ENCODE measurements at regions of chr12 and their contacts with region 1.

Region 1: GRCh38 chr12:32455607-32456071 is 56.3 kb downstream of the FGD4 start:
- DNase-seq: no peak
- H3K4me3 ChIP-seq: peak overlapping the region in 58 of 59 donors; percentile 13 to 72 (median 47)
- H3K27ac ChIP-seq: peak overlapping the region in 37 of 59 donors; percentile 3 to 73 (median 37)
- H3K27me3 ChIP-seq: no peaks in the 10 kb centered on the region
- CTCF ChIP-seq: peak; percentile 55 to 95 (median 81)

Region 2: GRCh38 chr12:32273712-32274111 is 181.9 kb before region 1 on chr12:
- intact Hi-C with region 1: no loop called
- DNase-seq: no peak
- H3K4me3 ChIP-seq: no peak overlapping the region
- H3K27ac ChIP-seq: no peak overlapping the region
- H3K27me3 ChIP-seq: no peaks in the 10 kb centered on the region
- CTCF ChIP-seq: no peak

Region 3: DNA sequence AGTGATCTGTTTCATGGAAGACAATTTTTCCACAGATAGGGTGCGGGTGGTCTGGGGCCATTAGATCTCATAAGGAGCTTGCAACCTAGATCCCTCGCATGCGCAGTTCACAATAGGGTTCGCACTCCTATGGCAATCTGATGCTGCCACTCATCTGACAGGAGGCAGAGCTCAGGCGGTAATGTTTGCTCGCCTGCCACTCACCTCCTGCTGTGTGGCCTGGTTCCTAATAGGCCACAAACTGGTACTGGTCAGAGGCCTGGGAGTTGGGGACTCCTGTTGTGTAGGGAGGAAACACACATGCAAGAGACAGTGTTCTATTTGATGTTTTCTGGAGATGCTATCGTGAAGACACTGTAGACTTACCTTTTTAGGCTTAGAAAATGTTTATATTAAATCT is 133.3 kb before region 1 on chr12:
- intact Hi-C with region 1: no loop called
- DNase-seq: peak in 1 of 10 donors; percentile 77
- H3K4me3 ChIP-seq: no peak overlapping the region
- H3K27ac ChIP-seq: peak overlapping the region in 2 of 59 donors; percentile 44 to 53
- H3K27me3 ChIP-seq: no peaks in the 10 kb centered on the region
- CTCF ChIP-seq: no peak

Region 4: GRCh38 chr12:32365473-32366064 is 90.1 kb before region 1 on chr12:
- intact Hi-C with region 1: loop called in 1 of 2 experiments (anchors 10 kb)
- DNase-seq: peak in 5 of 10 donors; percentile 26 to 63 (median 45)
- H3K4me3 ChIP-seq: no peak overlapping the region
- H3K27ac ChIP-seq: no peak overlapping the region
- H3K27me3 ChIP-seq: no peaks in the 10 kb centered on the region
- CTCF ChIP-seq: peak; percentile 59 to 89 (median 78)

Region 5: GRCh38 chr12:32377344-32378055 is 78.1 kb before region 1 on chr12:
- intact Hi-C with region 1: no loop called
- DNase-seq: no peak
- H3K4me3 ChIP-seq: no peak overlapping the region
- H3K27ac ChIP-seq: no peak overlapping the region
- H3K27me3 ChIP-seq: no peaks in the 10 kb centered on the region
- CTCF ChIP-seq: no peak

Region 6: GRCh38 chr12:32399337-32400113 is 56.1 kb before region 1 on chr12 and contains the start of gene FGD4:
- intact Hi-C with region 1: loop called in 1 of 2 experiments (anchors 10 kb)
- DNase-seq: peak; percentile 56 to 83 (median 76)
- H3K4me3 ChIP-seq: peak within 1 kb of the TSS; percentile 48 to 87 (median 78)
- H3K27ac ChIP-seq: peak within 1 kb of the TSS in 39 of 59 donors; percentile 1 to 87 (median 40)
- H3K27me3 ChIP-seq: no peaks in the 10 kb centered on the region
- CTCF ChIP-seq: peak in 49 of 56 donors; percentile 17 to 60 (median 40)
- total RNA-seq, gene FGD4: 23.1 to 59.4 (median 37.2) TPM

Region 7: DNA sequence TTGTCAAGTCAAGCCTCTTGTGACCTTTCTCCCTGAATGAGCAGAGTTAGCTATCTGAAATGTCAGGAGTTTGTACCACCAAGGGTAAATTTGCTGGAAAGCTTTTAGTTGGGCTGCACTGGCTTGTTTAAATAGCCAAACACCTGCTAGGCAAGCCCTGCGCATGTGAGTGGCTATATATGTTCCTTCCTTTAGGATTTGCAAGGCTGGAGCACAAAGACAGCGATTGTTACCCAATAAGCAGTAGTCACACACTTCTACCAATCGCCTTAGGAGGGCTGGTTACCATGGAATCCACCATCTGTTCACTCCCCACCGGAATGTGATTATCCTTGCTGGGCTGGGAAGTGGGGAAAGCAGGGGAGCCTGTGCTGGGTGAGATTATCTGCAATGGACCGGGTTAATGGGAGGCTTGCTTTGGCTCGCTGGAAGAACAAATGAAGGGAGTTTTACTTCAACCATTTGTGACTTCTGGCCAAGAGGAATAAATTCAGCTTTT is 46.2 kb after region 1 on chr12:
- intact Hi-C with region 1: loop called in 1 of 2 experiments (anchors 5 kb)
- DNase-seq: peak in 9 of 10 donors; percentile 48 to 78 (median 61)
- H3K4me3 ChIP-seq: peak overlapping the region; percentile 29 to 76 (median 59)
- H3K27ac ChIP-seq: peak overlapping the region in 58 of 59 donors; percentile 24 to 87 (median 74)
- H3K27me3 ChIP-seq: no peaks in the 10 kb centered on the region
- CTCF ChIP-seq: no peak

Region 8: GRCh38 chr12:32586390-32586789 is 130.8 kb after region 1 on chr12:
- intact Hi-C with region 1: loop called in 1 of 2 experiments (anchors 10 kb)
- DNase-seq: no peak
- H3K4me3 ChIP-seq: no peak overlapping the region
- H3K27ac ChIP-seq: no peak overlapping the region
- H3K27me3 ChIP-seq: no peaks in the 10 kb centered on the region
- CTCF ChIP-seq: no peak

Region 9: GRCh38 chr12:32659908-32660440 is 204.3 kb after region 1 on chr12:
- intact Hi-C with region 1: loop called (anchors 5 kb)
- DNase-seq: no peak
- H3K4me3 ChIP-seq: no peak overlapping the region
- H3K27ac ChIP-seq: no peak overlapping the region
- H3K27me3 ChIP-seq: no peaks in the 10 kb centered on the region
- CTCF ChIP-seq: no peak

Measured in dorsolateral prefrontal cortex (tissue), 120 donors.